ENCODE measurements at regions of chr6 and their contacts with region 1.

Region 1: DNA sequence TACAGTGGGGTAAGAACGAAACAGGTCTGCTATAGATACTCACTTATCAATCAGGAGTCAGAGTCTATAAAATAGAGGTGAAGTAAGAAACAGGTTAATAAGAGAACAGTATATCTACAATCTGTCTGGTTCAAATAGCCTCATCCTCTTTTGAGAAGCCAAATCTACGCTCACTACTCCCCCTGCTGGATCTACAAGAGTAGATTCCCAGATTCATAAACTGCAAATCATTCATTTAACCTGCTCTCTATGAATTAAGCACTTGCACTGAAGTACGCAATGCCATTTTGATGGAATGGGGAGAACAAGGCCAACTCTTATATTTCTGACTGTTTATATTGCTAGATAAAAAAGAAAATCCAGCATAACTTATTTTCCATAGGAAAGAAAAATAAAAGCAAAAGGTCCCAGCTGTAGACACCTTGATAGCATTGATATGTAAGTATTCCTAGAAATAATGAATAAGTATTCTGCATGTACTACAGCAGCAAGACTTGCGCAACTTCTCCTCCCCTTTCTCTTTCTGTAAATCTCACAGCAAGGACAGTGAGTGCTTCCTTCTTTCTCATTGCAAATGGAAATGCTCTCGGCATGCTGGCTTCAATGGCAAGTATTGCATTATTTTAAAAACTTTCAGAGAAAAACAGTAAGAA is 92.3 kb downstream of the RFX6 start:
- DNase-seq: peak in 1 of 2 experiments; percentile 15
- H3K4me3 ChIP-seq: no peak overlapping the region
- H3K27ac ChIP-seq: no peak overlapping the region
- H3K4me1 ChIP-seq: no peaks in the 10 kb centered on the region
- H3K27me3 ChIP-seq: no peaks in the 10 kb centered on the region
- CTCF ChIP-seq: peak; percentile 90

Region 2: DNA sequence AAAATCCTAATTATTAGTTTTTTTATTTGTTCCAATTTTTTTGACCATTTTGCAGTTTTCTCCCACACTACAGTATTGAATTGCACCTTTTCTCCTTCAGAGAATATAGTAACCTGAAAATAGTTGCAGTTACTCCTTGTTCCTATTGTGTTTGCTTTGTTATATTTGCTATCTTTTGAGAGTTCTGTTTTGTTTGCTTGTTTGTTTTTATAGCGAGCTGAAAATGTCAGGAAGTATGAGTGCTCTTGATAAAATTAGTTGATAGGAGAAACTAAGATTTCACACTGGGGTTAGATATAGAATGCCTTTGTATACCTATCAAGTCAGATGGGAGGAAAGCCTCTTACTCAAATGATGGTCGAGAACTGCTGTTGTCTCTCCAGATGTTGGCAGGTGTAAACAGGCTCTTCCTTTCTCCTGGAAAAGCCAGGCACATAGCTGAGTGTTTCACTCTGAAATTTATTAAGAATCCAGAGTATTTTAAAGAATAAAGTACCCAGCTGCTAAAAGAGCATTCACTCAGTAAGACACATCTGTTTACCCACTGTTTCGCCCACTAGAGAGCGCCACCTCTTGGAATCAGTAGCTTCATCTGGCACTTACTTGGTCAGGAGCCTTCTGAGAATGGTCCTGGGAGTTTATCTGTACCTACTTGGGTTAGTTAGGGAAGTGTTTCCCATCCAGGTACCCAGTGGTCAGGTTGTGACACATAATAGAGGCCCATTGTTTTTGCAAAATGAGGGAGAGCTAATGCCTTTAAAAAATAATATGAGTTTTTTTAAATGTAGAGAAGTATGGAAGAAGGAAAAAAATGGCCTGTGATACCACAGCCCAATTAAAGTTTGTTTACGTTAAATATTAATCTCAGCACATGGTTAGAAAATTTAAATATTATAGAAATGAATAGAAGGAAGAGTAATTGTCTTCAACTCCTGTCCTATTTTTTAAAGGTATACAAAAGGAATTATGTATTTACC is 857.5 kb before region 1 on chr6:
- CTCF ChIA-PET with region 1: no interaction called
- POLR2A ChIA-PET with region 1: no interaction called
- intact Hi-C with region 1: loop called (anchors 10 kb)
- DNase-seq: peak in 1 of 2 experiments; percentile 28
- H3K4me3 ChIP-seq: no peak overlapping the region
- H3K27ac ChIP-seq: no peak overlapping the region
- H3K4me1 ChIP-seq: no peaks in the 10 kb centered on the region
- H3K27me3 ChIP-seq: no peaks in the 10 kb centered on the region
- CTCF ChIP-seq: peak; percentile 77

Region 3: DNA sequence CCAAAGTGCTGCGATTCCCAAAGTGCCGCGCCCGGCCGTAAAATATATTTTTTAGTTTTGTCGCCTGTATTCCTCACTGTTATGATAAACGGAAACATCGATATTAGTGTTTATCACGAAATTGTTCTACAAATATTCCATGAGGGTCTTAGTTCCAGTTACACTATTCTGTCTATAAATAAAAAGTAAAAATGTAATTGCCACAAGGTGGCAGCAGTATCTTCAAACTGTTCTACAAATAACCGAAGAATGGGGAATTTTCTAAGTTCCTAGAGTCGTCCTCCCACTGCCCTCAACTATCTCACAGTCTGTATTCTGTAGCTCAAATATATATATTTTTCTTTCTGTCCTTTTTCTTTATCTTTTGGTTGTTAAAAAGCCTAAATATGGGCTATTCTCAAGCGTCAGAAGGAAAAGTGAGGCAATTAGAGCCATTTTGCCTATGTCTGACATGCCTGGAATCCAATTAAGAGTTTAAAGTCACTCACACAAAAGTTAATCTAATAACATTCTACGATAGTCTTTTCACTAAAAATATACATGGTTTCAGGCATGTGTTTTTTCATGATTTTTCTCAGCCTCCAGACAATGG is 189.7 kb before region 1 on chr6:
- CTCF ChIA-PET with region 1: no interaction called
- POLR2A ChIA-PET with region 1: no interaction called
- intact Hi-C with region 1: loop called (anchors 1 kb)
- DNase-seq: no peak
- H3K4me3 ChIP-seq: no peak overlapping the region
- H3K27ac ChIP-seq: no peak overlapping the region
- H3K4me1 ChIP-seq: no peaks in the 10 kb centered on the region
- H3K27me3 ChIP-seq: no peaks in the 10 kb centered on the region
- CTCF ChIP-seq: peak; percentile 79

Region 4: DNA sequence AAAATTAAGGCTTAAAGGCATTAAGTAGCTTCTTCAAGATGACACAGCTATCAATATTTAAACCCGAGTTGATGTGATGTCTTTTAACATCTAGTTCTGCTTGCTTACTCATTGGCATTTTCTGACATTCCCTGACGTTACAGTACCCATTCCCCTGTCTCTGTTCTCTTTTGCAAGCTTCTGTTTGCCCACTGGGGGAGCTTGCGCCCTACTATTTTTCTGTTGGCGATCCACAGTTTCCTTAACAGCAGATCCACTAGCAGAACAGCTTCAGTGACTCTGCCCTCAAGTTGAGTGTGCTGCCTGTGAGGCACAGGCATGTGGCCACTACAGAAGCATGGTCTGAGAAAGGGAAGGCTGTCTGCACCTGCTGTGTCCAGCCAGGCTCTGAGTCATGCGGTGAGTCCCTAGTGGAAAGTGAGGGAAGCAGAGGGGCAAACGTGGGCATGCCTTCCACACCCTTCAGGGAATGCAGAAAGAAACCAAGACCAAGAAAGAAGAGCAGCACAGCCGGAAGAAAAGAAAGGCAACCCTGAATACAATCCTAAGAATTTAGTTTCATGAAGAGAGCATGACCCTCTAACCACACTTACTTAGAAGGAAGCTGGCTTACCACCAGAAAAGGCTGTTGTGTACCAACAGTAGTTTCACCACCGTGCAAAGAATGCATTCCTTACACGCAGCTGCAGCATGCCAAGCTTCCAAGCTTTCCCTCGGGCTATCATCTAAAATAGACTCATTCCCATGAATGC is 198.4 kb after region 1 on chr6:
- CTCF ChIA-PET with region 1: no interaction called
- POLR2A ChIA-PET with region 1: no interaction called
- intact Hi-C with region 1: loop called (anchors 10 kb)
- DNase-seq: peak; percentile 44 to 74
- H3K4me3 ChIP-seq: no peak overlapping the region
- H3K27ac ChIP-seq: no peak overlapping the region
- H3K4me1 ChIP-seq: no peaks in the 10 kb centered on the region; the same call in 1 of the 2 replicates
- H3K27me3 ChIP-seq: no peaks in the 10 kb centered on the region
- CTCF ChIP-seq: no peak

Region 5: DNA sequence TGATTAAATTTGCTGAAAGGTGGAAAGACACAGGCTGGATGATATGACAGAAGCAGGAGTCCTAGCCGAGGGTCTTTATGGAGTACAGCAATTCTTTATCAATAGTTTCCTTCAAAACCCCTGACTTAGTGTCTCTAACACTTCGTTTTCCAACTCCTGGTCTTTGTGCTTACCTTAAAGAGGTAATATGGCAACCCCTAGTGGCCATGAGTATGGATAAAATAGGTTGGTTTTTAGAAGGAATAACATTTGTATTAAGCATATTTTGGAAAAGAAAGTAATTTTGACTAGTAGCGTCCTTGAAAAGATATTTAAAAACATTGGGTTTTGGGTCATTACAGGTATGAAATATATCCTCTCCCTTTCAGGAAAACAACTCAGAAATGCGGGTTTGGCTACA is 347.9 kb after region 1 on chr6:
- CTCF ChIA-PET with region 1: no interaction called
- POLR2A ChIA-PET with region 1: no interaction called
- intact Hi-C with region 1: loop called (anchors 1 kb)
- DNase-seq: peak in 1 of 2 experiments; percentile 39
- H3K4me3 ChIP-seq: no peak overlapping the region
- H3K27ac ChIP-seq: no peak overlapping the region
- H3K4me1 ChIP-seq: no peaks in the 10 kb centered on the region
- H3K27me3 ChIP-seq: no peaks in the 10 kb centered on the region
- CTCF ChIP-seq: peak; percentile 71

Region 6: GRCh38 chr6:117829594-117830319 is 860.4 kb after region 1 on chr6:
- CTCF ChIA-PET with region 1: no interaction called
- POLR2A ChIA-PET with region 1: no interaction called
- intact Hi-C with region 1: loop called (anchors 2 kb)
- DNase-seq: peak in 1 of 2 experiments; percentile 7
- H3K4me3 ChIP-seq: peak overlapping the region; percentile 48; the same call in 1 of the 2 replicates
- H3K27ac ChIP-seq: no peak overlapping the region
- H3K4me1 ChIP-seq: no peaks in the 10 kb centered on the region
- H3K27me3 ChIP-seq: no peaks in the 10 kb centered on the region
- CTCF ChIP-seq: peak; percentile 75

Measured in PC-9 (cell line).